ENCODE measurements at regions of chr19 and their contacts with region 1.

Region 1: DNA sequence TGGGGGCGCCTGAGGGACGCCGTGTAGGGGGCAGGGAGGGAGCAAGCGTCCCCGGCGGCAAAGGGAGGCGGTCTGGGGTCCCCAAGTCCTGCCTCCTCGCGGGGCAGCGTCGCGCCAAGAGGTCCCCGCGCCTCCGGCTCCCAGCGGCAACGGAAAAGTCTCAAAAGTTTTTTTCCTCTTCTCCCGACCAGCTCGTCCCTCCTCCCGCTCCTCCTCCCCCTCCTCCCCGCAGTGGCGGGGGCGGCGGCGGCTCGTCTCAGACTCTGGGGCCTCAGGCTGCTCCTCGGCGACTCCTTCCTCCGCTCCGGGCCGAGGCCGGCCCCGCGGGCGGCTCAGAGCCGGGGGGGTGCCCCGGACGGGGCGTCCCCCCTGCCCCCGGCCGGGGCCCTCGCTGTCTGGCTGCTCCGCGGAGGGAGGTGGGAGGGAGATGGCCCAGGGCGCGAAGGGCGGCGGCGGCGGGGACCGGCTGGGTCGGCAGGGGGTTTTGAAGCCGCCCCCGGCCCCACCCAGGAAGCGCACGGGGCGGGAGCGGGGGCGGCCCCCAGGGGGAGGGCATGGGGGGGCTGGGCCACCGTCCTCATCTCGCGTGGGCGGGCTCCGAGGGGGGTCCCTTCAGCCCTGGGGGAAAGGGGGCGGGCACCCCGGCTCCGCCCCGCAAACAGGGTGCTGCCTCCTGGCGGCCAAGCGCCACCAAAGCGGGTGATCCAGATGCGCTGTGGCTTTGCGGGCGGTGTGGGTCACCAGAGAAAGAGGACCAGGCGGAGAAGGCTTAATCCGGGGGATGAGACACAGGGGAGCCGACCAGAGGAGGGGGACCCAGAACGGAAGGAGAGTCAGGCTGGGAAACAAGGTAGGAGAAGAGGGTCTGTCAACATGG is at the start of gene TGFB1:
- DNase-seq: peak; percentile 93 to 95 (median 94)
- H3K4me3 ChIP-seq: peak within 1 kb of the TSS; percentile 68 to 88
- H3K4me3 Mint-ChIP-seq: peak within 1 kb of the TSS; percentile 90 to 100 (median 99)
- H3K27ac ChIP-seq: peak within 1 kb of the TSS; percentile 91
- H3K27ac Mint-ChIP-seq: peak within 1 kb of the TSS; percentile 89 to 99 (median 98)
- H3K4me1 ChIP-seq: peaks cover 68% of the 10 kb centered on the region
- H3K4me1 Mint-ChIP-seq: peaks cover 51 to 73% (median 61%) of the 10 kb centered on the region in 4 donors
- H3K27me3 ChIP-seq: no peaks in the 10 kb centered on the region
- H3K27me3 Mint-ChIP-seq: no peaks in the 10 kb centered on the region
- total RNA-seq, gene TGFB1: 136 to 143 TPM

Region 2: DNA sequence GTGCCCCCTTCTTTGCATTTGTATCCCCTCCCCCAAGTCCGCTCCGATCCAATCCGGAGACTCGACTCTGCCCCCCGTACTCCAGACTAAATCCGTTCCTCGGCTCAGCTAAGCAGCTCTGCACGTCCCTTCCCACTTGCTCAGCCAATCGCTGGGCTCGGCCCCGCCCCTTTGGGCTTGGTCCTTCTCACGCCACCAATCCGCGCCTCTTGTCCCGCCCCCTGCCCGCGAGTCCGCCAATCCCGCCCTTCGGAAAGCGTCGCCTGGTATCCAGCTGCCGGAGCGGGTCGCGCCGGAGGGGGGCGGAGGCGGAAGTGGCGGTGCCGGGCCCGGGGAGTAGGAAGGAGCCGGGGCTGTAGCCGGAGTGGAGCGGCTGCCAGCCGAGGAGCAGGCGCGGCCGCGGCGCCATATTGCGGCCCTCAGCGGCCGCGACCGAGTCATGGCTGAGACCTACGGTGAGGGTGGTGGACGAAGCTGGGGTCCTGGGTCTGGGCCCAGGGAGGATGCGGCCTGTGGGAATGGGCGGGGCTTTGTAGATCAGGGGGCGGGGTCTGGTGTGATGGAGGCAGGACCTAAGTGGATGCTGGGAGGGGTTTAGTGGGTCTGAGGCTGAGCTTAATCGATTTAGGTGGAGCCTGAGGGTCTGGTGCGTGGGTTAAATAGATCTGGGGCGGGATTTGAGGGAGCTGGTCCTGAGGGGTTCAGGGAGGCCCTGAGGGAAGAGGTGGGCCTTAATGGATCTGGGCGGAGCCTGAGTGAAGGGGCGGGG is 575.6 kb before region 1 on chr19 and contains the start of gene RAB4B:
- CTCF ChIA-PET with region 1: no interaction called
- POLR2A ChIA-PET with region 1: interaction called, 11 read pairs
- intact Hi-C with region 1: no loop called
- DNase-seq: peak; percentile 100
- H3K4me3 ChIP-seq: peak within 1 kb of the TSS; percentile 67 to 98
- H3K4me3 Mint-ChIP-seq: peak within 1 kb of the TSS; percentile 92 to 98 (median 95)
- H3K27ac ChIP-seq: peak within 1 kb of the TSS; percentile 89
- H3K27ac Mint-ChIP-seq: peak within 1 kb of the TSS; percentile 95 to 99 (median 99)
- H3K4me1 ChIP-seq: peaks cover 29% of the 10 kb centered on the region
- H3K4me1 Mint-ChIP-seq: peaks cover 24 to 45% (median 31%) of the 10 kb centered on the region in 4 donors
- H3K27me3 ChIP-seq: no peaks in the 10 kb centered on the region
- H3K27me3 Mint-ChIP-seq: no peaks in the 10 kb centered on the region
- total RNA-seq, gene RAB4B: 53.5 to 55.0 TPM

Region 3: GRCh38 chr19:41303954-41304353 is 49.8 kb before region 1 on chr19:
- CTCF ChIA-PET with region 1: interaction called, 12 read pairs
- POLR2A ChIA-PET with region 1: interaction called, 273 read pairs
- intact Hi-C with region 1: no loop called
- DNase-seq: peak; percentile 52 to 72 (median 55)
- H3K4me3 ChIP-seq: peak overlapping the region in 1 of 2 donors; percentile 41
- H3K4me3 Mint-ChIP-seq: peak overlapping the region; percentile 77 to 100 (median 90)
- H3K27ac ChIP-seq: peak overlapping the region; percentile 76
- H3K27ac Mint-ChIP-seq: peak overlapping the region; percentile 97 to 100 (median 99)
- H3K4me1 ChIP-seq: peaks cover 100% of the 10 kb centered on the region
- H3K4me1 Mint-ChIP-seq: peaks cover 70 to 100% (median 90%) of the 10 kb centered on the region in 4 donors
- H3K27me3 ChIP-seq: no peaks in the 10 kb centered on the region
- H3K27me3 Mint-ChIP-seq: no peaks in the 10 kb centered on the region

Region 4: DNA sequence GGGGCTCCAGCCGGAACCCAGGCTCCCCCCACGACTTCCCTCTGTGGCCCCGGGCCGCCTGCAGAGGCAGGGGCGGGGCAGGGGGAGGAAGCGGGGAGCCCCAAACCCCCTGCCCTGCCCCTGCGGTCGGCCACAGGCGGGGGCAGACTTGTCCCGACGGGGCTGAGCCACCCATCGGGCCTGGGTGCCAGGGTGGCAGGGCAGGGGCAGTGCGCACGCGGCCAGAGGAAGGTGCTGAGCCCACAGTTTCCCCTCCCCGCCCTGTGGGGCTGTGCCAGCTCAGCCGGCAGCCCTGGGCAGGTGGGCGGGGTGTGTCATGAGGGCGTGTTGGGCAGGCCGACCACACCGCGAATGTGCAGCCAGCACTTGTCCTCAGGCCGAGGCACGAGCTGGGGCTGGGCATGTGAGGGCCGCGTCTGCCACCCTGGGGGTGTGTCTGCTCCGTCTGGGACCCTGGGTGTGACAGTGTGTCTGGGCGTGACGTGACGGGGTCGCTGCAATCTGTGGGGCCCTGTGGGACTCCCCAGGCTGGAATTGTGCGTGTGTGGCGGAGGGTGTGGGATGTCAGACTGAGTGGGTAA is 26.0 kb before region 1 on chr19:
- CTCF ChIA-PET with region 1: interaction called, 16 read pairs
- POLR2A ChIA-PET with region 1: interaction called, 136 read pairs
- intact Hi-C with region 1: loop called (anchors 1 kb)
- DNase-seq: peak; percentile 81 to 99 (median 84)
- H3K4me3 ChIP-seq: peak overlapping the region in 1 of 2 donors; percentile 43
- H3K4me3 Mint-ChIP-seq: peak overlapping the region; percentile 77 to 87 (median 84)
- H3K27ac ChIP-seq: peak overlapping the region; percentile 76
- H3K27ac Mint-ChIP-seq: peak overlapping the region; percentile 97 to 99 (median 98)
- H3K4me1 ChIP-seq: peaks cover 69% of the 10 kb centered on the region
- H3K4me1 Mint-ChIP-seq: peaks cover 45 to 81% (median 62%) of the 10 kb centered on the region in 4 donors
- H3K27me3 ChIP-seq: no peaks in the 10 kb centered on the region
- H3K27me3 Mint-ChIP-seq: no peaks in the 10 kb centered on the region

Region 5: GRCh38 chr19:41363753-41364523 is 10.2 kb after region 1 on chr19 and contains the start of gene B9D2:
- CTCF ChIA-PET with region 1: interaction called, 48 read pairs
- POLR2A ChIA-PET with region 1: interaction called, 184 read pairs
- intact Hi-C with region 1: loop called (anchors 1 kb)
- DNase-seq: peak; percentile 98 to 99 (median 99)
- H3K4me3 ChIP-seq: peak within 1 kb of the TSS; percentile 77 to 91
- H3K4me3 Mint-ChIP-seq: peak within 1 kb of the TSS; percentile 93 to 98 (median 95)
- H3K27ac ChIP-seq: peak within 1 kb of the TSS; percentile 99
- H3K27ac Mint-ChIP-seq: peak within 1 kb of the TSS; percentile 97 to 100 (median 100)
- H3K4me1 ChIP-seq: peaks cover 24% of the 10 kb centered on the region
- H3K4me1 Mint-ChIP-seq: peaks cover 15 to 45% (median 23%) of the 10 kb centered on the region in 4 donors
- H3K27me3 ChIP-seq: no peaks in the 10 kb centered on the region
- H3K27me3 Mint-ChIP-seq: no peaks in the 10 kb centered on the region
- total RNA-seq, gene B9D2: 11.6 to 15.2 TPM

Region 6: GRCh38 chr19:41386442-41386841 is 32.7 kb after region 1 on chr19:
- CTCF ChIA-PET with region 1: no interaction called
- POLR2A ChIA-PET with region 1: no interaction called
- intact Hi-C with region 1: no loop called
- DNase-seq: no peak
- H3K4me3 ChIP-seq: no peak overlapping the region
- H3K4me3 Mint-ChIP-seq: no peak overlapping the region
- H3K27ac ChIP-seq: no peak overlapping the region
- H3K27ac Mint-ChIP-seq: peak overlapping the region in 1 of 7 donors; percentile 74
- H3K4me1 ChIP-seq: no peaks in the 10 kb centered on the region
- H3K4me1 Mint-ChIP-seq: peaks cover 0 to 4% (median 0%) of the 10 kb centered on the region in 4 donors
- H3K27me3 ChIP-seq: no peaks in the 10 kb centered on the region
- H3K27me3 Mint-ChIP-seq: no peaks in the 10 kb centered on the region

Region 7: DNA sequence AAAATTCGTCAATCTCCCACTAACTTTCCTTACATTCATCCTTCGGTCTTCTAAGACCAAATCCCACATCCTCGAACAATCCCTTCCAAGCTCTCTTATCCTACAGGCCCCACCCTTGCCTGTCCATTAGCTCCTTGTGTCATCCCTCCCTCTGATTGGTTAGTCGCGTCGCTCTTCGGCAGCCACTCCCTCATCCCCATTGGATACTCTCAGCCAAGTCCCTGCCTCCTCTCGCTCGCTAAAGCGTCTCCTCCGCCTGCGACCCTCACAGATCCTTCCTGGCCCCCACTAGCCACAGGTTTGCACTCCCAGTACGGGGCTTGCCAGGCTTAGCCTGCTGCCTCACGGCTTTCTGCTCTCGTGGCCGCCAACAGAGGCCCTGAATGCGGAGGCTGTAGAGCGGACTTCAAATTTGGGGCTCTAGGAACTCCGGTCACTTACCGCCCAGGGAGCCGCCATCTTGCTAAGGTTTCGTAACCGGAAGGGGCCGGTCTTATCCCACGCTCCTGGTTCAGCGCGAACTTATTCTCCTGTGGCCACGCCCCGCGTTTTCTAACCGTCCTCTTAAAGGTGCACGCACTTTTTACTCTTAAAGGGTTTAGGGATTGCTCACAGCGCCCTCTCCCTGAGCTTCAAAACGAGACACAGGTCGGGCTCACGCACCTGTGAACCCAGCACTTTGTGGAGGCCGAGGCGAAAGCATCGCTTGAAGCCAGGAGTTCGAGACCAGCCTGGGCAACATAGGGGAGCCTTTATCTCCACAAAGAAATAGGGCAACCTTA is 85.9 kb after region 1 on chr19 and contains the start of gene DMAC2:
- CTCF ChIA-PET with region 1: interaction called, 4 read pairs
- POLR2A ChIA-PET with region 1: interaction called, 6 read pairs
- intact Hi-C with region 1: loop called (anchors 2 kb)
- DNase-seq: peak; percentile 87 to 97 (median 92)
- H3K4me3 ChIP-seq: peak within 1 kb of the TSS; percentile 80 to 93
- H3K4me3 Mint-ChIP-seq: peak within 1 kb of the TSS in 3 of 8 donors; percentile 5 to 80 (median 27)
- H3K27ac ChIP-seq: peak within 1 kb of the TSS; percentile 85
- H3K27ac Mint-ChIP-seq: peak within 1 kb of the TSS in 4 of 7 donors; percentile 22 to 60 (median 25)
- H3K4me1 ChIP-seq: peaks cover 19% of the 10 kb centered on the region
- H3K4me1 Mint-ChIP-seq: peaks cover 6 to 11% (median 10%) of the 10 kb centered on the region in 4 donors
- H3K27me3 ChIP-seq: no peaks in the 10 kb centered on the region
- H3K27me3 Mint-ChIP-seq: peaks cover 6 to 7% of the 10 kb centered on the region in 2 donors
- total RNA-seq, gene DMAC2: 27.7 to 28.9 TPM

Measured in CD4-positive, alpha-beta memory T cell (primary cell).